Dorsolateral prefrontal cortex (tissue), 120 donors: ENCODE measurements at regions of chr16 and their contacts with region 1.

Region 1: DNA sequence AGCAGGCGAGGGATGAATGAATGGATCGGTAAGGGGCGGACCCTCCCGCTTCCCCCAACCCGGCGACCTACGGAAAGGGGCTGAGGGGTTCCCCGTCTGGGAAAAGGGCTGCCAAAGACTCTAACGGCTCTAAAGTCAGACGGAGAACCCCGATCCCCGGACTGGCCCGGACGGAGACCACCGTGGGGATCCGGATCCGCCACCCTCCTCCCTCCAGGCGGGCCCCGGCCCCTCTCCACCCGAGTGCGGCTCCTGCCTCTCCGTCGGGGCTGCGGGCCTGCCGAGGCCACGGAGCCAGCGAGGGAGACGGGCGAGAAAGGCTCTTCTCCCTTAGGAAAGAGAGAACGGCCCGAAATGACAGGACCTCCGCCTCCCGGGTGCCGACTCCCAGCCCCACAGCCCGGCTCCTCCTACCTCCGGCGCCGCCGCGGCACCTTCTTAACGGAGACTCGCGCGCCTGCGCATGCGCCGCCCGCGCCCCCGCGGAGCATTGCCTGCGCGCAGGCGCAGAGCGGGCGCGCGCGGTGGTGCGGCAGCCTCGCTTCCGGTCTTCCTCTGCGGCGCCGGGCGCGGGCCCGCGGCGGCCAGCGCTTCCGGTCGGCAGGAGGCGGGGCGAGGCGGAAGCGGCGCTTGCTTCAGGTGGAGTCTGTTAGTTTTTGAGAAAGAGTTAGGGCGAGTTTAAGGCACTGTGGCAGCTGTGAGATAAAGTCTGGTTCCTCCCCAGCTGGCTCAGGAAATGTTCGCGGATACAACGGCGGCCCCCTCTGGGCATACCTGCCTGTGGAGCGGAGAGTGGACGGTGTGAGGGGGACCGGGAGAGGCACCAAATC is at the start of gene SLX4:
- DNase-seq: peak; percentile 59 to 90 (median 76)
- H3K4me3 ChIP-seq: peak within 1 kb of the TSS; percentile 75 to 100 (median 97)
- H3K27ac ChIP-seq: peak within 1 kb of the TSS in 57 of 59 donors; percentile 43 to 95 (median 85)
- H3K27me3 ChIP-seq: no peaks in the 10 kb centered on the region
- CTCF ChIP-seq: peak in 29 of 56 donors; percentile 3 to 64 (median 32)
- total RNA-seq, gene SLX4: 7.3 to 19.3 (median 12.6) TPM

Region 2: DNA sequence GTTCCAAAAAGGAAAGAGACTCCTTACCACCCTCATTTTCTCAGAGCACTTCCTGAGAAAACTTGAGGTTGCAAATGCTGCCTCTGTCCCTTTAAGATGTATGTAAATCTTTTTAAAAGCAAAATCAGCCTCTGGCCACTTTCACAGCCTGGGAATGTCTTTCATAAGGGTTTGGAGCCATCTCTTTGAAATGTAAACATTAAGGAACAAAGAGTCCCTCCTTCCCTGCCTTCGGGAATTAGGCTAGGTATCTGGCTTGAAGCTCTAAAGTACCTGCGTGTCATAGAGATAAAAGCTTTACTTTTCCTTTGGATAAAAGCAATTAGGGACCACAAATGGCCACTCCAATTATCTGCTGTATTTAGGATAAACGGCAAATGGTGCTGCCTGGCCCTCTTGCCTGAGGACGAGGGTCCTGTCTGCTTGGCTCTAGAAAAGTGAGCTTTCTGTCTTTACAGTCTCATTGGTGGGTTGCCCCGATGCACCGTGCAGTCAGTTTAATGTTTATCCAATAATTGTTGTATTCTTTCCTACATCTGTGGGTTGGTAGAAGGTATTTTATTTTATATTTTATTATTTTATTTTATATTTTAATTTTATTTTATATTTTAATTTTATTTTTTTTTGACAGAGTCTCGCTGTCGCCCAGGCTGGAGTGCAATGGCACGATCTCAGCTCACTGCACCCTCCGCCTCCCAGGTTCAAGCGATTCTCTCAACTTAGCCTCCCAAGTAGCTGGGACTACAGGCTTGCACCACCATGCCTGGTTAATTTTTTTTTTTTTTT is 58.0 kb before region 1 on chr16:
- intact Hi-C with region 1: no loop called
- DNase-seq: no peak
- H3K4me3 ChIP-seq: no peak overlapping the region
- H3K27ac ChIP-seq: no peak overlapping the region
- H3K27me3 ChIP-seq: no peaks in the 10 kb centered on the region
- CTCF ChIP-seq: no peak

Region 3: GRCh38 chr16:3674513-3675295 is 63.3 kb after region 1 on chr16:
- intact Hi-C with region 1: loop called in 1 of 2 experiments (anchors 10 kb)
- DNase-seq: no peak
- H3K4me3 ChIP-seq: no peak overlapping the region
- H3K27ac ChIP-seq: no peak overlapping the region
- H3K27me3 ChIP-seq: no peaks in the 10 kb centered on the region
- CTCF ChIP-seq: no peak